Caki2 (cell line): ENCODE measurements at regions of chr12 and their contacts with region 1.

Region 1: GRCh38 chr12:78284417-78284816 is 453.7 kb downstream of the NAV3 start:
- DNase-seq: no peak

Region 2: DNA sequence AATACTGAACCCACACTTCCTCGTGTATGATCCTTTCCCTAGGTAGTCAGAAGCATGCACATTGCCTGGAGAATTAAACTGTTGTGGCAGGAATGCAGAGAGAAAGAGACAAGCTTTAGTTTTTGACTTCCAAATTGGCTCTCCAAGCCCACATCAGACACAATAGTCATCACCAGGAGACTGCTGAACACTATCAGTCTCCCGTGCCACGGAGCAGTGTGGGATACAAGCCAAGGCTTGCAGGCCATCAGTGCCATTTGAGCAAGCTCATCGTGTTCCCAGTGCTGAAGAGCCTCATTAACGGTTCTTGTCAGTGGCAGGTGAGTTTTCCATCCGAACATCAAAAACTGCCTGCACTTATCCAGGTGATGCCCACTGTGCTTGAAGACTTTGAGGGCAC is 43.0 kb before region 1 on chr12:
- in situ Hi-C with region 1: loop called (anchors 5 kb)
- DNase-seq: no peak